Activated naive CD4-positive, alpha-beta T cell treated with anti-CD3 and anti-CD28 coated beads for 36 hours (primary cell): ENCODE measurements at regions of chr17 and their contacts with region 1.

Region 1: GRCh38 chr17:58303971-58304725 is 23.4 kb upstream of the MPO start:
- DNase-seq: peak; percentile 70
- H3K4me3 Mint-ChIP-seq: no peak overlapping the region
- H3K27ac Mint-ChIP-seq: no peak overlapping the region
- H3K4me1 Mint-ChIP-seq: no peaks in the 10 kb centered on the region
- H3K27me3 Mint-ChIP-seq: no peaks in the 10 kb centered on the region

Region 2: GRCh38 chr17:58156839-58157803 is 147.0 kb before region 1 on chr17:
- CTCF ChIA-PET with region 1: no interaction called
- intact Hi-C with region 1: no loop called
- DNase-seq: peak; percentile 71
- H3K4me3 Mint-ChIP-seq: peak overlapping the region; percentile 76
- H3K27ac Mint-ChIP-seq: peak overlapping the region; percentile 66
- H3K4me1 Mint-ChIP-seq: peaks cover 41% of the 10 kb centered on the region
- H3K27me3 Mint-ChIP-seq: no peaks in the 10 kb centered on the region

Region 3: DNA sequence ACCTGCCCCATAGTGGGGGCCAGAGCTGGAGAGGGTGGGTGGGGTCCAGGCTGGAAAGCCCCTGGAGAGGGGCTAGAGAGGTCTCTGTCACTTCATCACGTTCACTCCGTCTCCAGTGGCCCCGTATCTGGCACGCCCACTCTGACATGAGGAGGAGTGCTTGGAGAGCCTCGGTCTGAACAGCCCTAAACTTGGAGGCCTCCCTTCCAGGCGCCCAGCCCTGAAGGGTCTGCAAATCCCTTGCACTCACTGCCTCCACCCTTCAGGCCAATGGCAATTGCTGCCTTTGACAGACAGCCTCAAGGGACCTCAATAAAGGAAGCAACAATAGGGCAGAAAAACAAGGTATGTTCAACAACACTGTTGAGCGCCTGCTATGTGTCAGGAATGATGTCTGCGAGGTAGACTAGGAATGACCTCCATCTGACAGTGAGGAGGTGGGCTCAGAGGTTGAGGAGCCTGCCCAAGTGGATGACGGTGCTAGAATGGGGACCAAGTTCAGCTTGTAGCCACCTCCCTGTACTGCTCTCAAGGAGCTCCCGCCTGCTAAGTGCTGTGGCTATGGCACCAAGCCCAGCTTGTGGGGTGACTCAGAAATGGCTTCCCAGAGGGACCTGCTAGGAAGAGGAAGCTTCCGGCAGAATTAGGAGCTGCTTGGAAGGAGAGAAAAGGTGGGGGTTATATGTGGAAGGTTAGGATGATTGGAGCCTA is 114.6 kb before region 1 on chr17:
- CTCF ChIA-PET with region 1: no interaction called
- intact Hi-C with region 1: no loop called
- DNase-seq: no peak
- H3K4me3 Mint-ChIP-seq: no peak overlapping the region
- H3K27ac Mint-ChIP-seq: peak overlapping the region; percentile 36
- H3K4me1 Mint-ChIP-seq: no peaks in the 10 kb centered on the region
- H3K27me3 Mint-ChIP-seq: no peaks in the 10 kb centered on the region

Region 4: GRCh38 chr17:58329035-58329809 is 25.1 kb after region 1 on chr17:
- CTCF ChIA-PET with region 1: no interaction called
- intact Hi-C with region 1: loop called (anchors 1 kb)
- DNase-seq: peak; percentile 91
- H3K4me3 Mint-ChIP-seq: peak overlapping the region; percentile 92
- H3K27ac Mint-ChIP-seq: peak overlapping the region; percentile 99
- H3K4me1 Mint-ChIP-seq: peaks cover 40% of the 10 kb centered on the region
- H3K27me3 Mint-ChIP-seq: peaks cover 14% of the 10 kb centered on the region

Region 5: DNA sequence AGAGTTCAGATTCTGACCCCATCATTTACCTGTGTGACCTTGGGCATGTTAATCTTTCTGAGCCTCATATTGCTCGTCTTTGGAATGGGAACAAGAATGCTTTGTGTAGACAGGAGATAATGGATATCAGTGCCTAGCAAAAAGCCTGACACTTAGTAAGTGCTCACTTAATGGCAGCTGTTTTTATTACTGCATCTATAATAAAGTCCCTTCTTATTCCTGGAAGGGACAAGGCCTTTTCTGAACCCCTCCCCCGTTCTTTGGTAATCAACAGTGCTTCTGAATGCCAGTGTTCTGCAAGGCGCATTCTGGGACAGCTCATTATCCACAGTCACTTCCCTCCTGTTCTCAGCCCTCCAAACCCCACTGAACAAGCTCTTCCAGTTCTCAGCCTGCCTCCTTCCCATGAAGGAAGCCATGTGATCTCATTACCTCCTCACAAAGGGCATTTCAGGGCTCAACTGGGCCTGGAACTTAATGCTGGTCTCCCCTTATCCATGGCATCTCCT is 73.0 kb after region 1 on chr17:
- CTCF ChIA-PET with region 1: interaction called, 13 read pairs
- intact Hi-C with region 1: no loop called
- DNase-seq: no peak
- H3K4me3 Mint-ChIP-seq: no peak overlapping the region
- H3K27ac Mint-ChIP-seq: no peak overlapping the region
- H3K4me1 Mint-ChIP-seq: peaks cover 27% of the 10 kb centered on the region
- H3K27me3 Mint-ChIP-seq: no peaks in the 10 kb centered on the region

Region 6: DNA sequence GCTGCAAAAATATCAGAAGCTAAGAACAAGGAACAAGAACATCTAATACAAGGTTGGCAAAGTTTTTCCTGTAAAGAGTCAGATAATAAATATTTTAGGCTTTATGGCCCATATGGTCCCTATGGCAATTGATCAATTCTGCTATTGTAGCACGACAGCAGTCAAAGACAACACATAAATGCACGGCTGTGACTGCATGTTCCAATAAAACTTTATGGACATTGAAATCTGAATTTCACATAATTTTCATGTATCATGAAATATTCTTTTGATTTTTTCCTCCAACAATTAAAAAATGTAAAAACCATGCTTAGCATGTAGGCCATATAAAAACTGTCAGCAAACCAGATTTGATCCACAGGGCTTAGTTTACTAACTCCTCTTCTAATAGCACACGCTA is 123.7 kb after region 1 on chr17:
- CTCF ChIA-PET with region 1: interaction called, 15 read pairs
- intact Hi-C with region 1: no loop called
- DNase-seq: no peak
- H3K4me3 Mint-ChIP-seq: no peak overlapping the region
- H3K27ac Mint-ChIP-seq: no peak overlapping the region
- H3K4me1 Mint-ChIP-seq: no peaks in the 10 kb centered on the region
- H3K27me3 Mint-ChIP-seq: no peaks in the 10 kb centered on the region

Region 7: DNA sequence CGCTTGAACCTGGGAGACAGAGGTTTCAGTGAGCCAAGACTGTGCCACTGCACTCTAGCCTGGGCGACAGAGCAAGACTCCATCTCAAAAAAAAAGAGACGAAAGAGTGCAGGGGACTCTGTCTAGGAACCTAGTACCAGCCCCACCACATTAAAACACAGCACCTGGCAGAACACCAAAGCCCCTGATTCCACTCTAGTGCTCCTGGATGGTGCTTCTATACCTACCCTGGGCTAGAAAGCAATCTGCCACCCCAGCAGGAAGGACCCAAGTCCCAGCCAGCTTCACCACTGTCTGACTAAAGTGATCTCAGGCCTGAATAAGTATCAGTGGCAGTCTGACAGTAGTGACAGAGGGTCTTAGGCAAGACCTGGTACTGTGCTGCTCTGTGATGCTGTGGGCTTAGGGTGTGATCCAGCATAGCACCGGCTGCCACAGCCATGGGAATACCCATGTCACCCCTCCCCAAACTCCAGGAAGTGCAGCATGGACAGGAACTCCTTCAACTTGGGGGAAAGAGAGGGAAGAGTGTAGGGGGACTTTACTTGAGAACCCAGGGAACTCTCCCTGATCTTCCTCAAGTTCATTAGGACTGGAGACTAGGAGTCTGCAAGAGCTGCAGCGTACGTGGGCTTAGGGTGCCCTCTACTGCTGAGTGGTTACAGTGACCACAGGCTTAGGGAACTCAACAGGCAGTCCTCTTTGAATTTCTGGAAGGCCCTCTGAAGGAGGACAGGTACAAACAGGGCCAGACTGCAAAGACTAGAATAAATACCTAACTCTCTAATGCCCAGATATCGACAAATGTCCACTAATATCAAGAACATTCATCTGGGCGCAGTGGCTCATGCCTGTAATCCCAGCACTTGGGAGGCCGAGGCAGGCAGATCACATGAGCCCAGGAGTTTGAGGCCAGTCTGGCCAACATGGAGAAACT is 143.2 kb after region 1 on chr17:
- CTCF ChIA-PET with region 1: interaction called, 13 read pairs
- intact Hi-C with region 1: loop called (anchors 1 kb)
- DNase-seq: peak; percentile 86
- H3K4me3 Mint-ChIP-seq: no peak overlapping the region
- H3K27ac Mint-ChIP-seq: no peak overlapping the region
- H3K4me1 Mint-ChIP-seq: peaks cover 1% of the 10 kb centered on the region
- H3K27me3 Mint-ChIP-seq: no peaks in the 10 kb centered on the region

Region 8: GRCh38 chr17:58487589-58488427 is 183.7 kb after region 1 on chr17 and contains the start of gene HSF5:
- CTCF ChIA-PET with region 1: no interaction called
- intact Hi-C with region 1: no loop called
- DNase-seq: peak; percentile 79
- H3K4me3 Mint-ChIP-seq: peak within 1 kb of the TSS; percentile 58
- H3K27ac Mint-ChIP-seq: no peak within 1 kb of the TSS
- H3K4me1 Mint-ChIP-seq: peaks cover 15% of the 10 kb centered on the region
- H3K27me3 Mint-ChIP-seq: no peaks in the 10 kb centered on the region
- total RNA-seq, gene HSF5: 3.6 to 4.1 TPM